GM12878 (cell line): ENCODE measurements at regions of chrX and their contacts with region 1.

Region 1: DNA sequence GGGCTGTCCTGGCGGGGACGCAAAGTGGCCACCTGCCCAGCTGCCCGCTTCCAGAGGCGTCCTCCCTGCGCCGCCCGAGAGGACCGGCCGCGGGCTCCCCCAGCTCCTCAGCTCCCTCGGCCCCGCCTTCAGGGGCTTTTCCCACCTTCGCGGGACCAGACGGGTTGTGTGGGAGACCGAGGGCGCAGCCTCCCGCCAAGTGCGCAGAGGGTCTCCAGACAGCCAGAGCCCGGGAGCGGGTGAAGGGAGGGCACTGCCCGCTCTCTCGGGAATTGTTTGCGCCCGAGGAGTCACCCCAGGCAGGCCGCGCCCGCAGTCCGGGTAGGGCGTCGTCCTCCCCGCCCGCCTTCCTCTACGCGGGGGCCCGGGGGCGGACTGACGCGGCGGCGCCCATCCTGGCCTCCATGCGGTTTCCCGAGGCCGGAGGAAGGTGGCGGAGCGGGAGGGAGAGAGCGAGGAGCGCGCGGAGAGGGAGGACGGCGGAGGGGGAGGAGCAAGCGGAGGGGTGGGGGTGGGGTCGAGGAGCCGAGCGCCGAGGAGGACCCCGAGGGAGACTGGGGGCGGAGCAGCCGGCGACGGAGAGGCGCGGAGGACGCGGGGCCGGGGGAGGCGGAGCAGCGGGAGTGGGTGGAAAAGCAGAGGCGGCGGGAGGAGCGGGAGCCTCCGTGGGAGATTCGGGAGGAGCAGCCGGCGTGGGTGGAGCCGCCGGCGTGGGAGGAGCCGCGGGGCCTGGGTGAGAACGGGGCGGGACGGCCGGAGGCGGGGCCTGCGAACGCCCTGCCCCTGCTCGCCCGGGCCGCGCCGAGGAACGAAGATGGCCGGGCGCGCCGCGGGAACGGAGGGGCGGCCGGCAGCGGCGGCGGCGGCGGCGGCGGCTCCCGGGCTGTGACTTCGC is 47.6 kb downstream of the CLDN34 start:
- DNase-seq: no peak
- ATAC-seq: peak; percentile 66
- H3K4me3 ChIP-seq: peak overlapping the region; percentile 58; the same call in 1 of the 2 replicates
- H3K27ac ChIP-seq: peak overlapping the region; percentile 33; the same call in 1 of the 2 replicates
- H3K4me1 ChIP-seq: peaks cover 9% of the 10 kb centered on the region
- H3K27me3 ChIP-seq: no peaks in the 10 kb centered on the region
- CTCF ChIP-seq: no peak
- EP300 ChIP-seq: no peak
- POLR2A ChIP-seq: peak; percentile 48; the same call in 1 of the 2 replicates
- RAD21 ChIP-seq: no peak

Region 2: DNA sequence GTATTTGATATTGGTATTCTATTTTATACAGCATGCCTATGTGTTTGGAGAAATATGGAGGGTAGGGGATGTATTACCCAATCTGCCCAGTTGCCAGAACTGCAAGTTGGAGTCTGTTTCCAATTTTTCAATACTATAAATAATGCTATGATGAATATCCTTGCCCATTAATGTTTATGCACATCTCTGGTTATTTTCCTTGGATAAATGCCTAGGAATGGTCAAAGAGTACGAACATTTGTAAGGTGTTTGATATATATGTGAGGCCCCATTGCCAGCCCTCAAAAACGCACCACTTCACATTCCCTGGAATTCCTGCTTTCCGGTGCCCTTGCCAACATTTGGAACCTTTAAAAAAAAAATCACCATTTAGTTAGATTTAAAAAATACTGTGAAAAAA is 13.2 kb before region 1 on chrX:
- CTCF ChIA-PET with region 1: interaction called, 30 read pairs
- POLR2A ChIA-PET with region 1: interaction called, 26 read pairs
- RAD21 ChIA-PET with region 1: interaction called, 53 read pairs
- SMC1A ChIA-PET with region 1: interaction called, 54 read pairs
- in situ Hi-C with region 1: no loop called
- intact Hi-C with region 1: loop called (anchors 2 kb)
- DNase-seq: no peak
- ATAC-seq: no peak
- H3K4me3 ChIP-seq: no peak overlapping the region
- H3K27ac ChIP-seq: no peak overlapping the region
- H3K4me1 ChIP-seq: peaks cover 9% of the 10 kb centered on the region
- H3K27me3 ChIP-seq: no peaks in the 10 kb centered on the region
- CTCF ChIP-seq: no peak
- EP300 ChIP-seq: no peak
- POLR2A ChIP-seq: no peak
- RAD21 ChIP-seq: no peak

Region 3: DNA sequence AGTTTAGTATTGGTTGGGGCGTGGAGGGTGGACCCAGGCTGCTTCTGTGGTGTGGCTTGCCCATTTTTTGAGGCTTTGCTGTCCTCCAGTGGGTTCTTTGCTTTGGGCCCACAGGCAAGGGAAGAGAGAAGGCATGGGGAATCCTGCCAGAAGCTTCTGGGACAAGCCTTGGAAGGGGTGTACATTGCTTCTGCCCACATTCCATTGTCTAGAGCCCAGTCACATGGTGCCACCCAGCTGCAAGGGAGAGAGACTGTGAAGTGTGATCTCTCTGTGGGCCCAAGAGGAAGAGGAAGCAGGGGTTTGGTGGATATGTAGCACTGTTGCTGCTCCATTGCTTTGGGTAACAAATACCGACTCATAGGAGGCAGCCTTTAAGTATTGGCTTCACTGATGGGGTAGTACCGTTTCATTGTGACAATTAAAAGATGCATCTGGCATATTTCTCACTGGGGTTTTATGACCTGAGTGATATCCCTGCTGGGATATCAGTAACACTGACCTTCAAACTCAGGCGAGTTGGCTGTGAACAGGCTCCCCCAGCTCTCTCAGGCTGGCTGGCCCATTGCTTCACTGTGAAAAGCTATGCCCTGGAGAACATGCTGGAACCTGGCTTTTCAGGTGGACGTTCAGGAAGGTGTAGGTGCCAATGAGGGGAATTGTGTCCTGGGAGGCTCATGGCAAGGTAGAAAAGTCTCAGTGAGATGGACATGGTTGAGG is 38.4 kb after region 1 on chrX:
- CTCF ChIA-PET with region 1: no interaction called
- POLR2A ChIA-PET with region 1: no interaction called
- RAD21 ChIA-PET with region 1: interaction called, 5 read pairs
- SMC1A ChIA-PET with region 1: no interaction called
- in situ Hi-C with region 1: no loop called
- intact Hi-C with region 1: loop called (anchors 5 kb)
- DNase-seq: no peak
- ATAC-seq: peak; percentile 59
- H3K4me3 ChIP-seq: no peak overlapping the region
- H3K27ac ChIP-seq: no peak overlapping the region
- H3K4me1 ChIP-seq: no peaks in the 10 kb centered on the region
- H3K27me3 ChIP-seq: peaks cover 0 to 4% of the 10 kb centered on the region in 2 experiments; a peak in 1 of 4 replicates
- CTCF ChIP-seq: no peak
- EP300 ChIP-seq: no peak
- POLR2A ChIP-seq: no peak
- RAD21 ChIP-seq: no peak; the same call in 1 of the 2 replicates

Region 4: GRCh38 chrX:10062352-10062751 is 47.6 kb after region 1 on chrX:
- CTCF ChIA-PET with region 1: interaction called, 3 read pairs
- POLR2A ChIA-PET with region 1: no interaction called
- RAD21 ChIA-PET with region 1: interaction called, 4 read pairs
- SMC1A ChIA-PET with region 1: interaction called, 11 read pairs
- in situ Hi-C with region 1: no loop called
- intact Hi-C with region 1: no loop called
- DNase-seq: peak; percentile 45
- ATAC-seq: peak; percentile 89
- H3K4me3 ChIP-seq: no peak overlapping the region
- H3K27ac ChIP-seq: no peak overlapping the region
- H3K4me1 ChIP-seq: peaks cover 5% of the 10 kb centered on the region; the same call in 1 of the 2 replicates
- H3K27me3 ChIP-seq: no peaks in the 10 kb centered on the region
- CTCF ChIP-seq: no peak
- EP300 ChIP-seq: peak in 1 of 2 experiments; percentile 53; a peak in 2 of 4 replicates
- POLR2A ChIP-seq: no peak
- RAD21 ChIP-seq: no peak

Region 5: GRCh38 chrX:10098270-10098713 is 83.6 kb after region 1 on chrX:
- CTCF ChIA-PET with region 1: interaction called, 17 read pairs
- POLR2A ChIA-PET with region 1: interaction called, 16 read pairs
- RAD21 ChIA-PET with region 1: interaction called, 12 read pairs
- SMC1A ChIA-PET with region 1: interaction called, 32 read pairs
- in situ Hi-C with region 1: no loop called
- intact Hi-C with region 1: no loop called
- DNase-seq: peak; percentile 51
- ATAC-seq: peak; percentile 87
- H3K4me3 ChIP-seq: peak overlapping the region; percentile 50
- H3K27ac ChIP-seq: peak overlapping the region; percentile 77
- H3K4me1 ChIP-seq: peaks cover 11% of the 10 kb centered on the region
- H3K27me3 ChIP-seq: no peaks in the 10 kb centered on the region; a peak in 1 of 4 replicates
- CTCF ChIP-seq: no peak
- EP300 ChIP-seq: peak in 1 of 2 experiments; percentile 63; a peak in 1 of 4 replicates
- POLR2A ChIP-seq: no peak
- RAD21 ChIP-seq: 0 out of 2 replicates have a peak, but pooled peaks have one; percentile 19

Region 6: GRCh38 chrX:10111364-10112148 is 96.8 kb after region 1 on chrX:
- CTCF ChIA-PET with region 1: interaction called, 57 read pairs
- POLR2A ChIA-PET with region 1: interaction called, 8 read pairs
- RAD21 ChIA-PET with region 1: interaction called, 31 read pairs
- SMC1A ChIA-PET with region 1: interaction called, 50 read pairs
- in situ Hi-C with region 1: no loop called
- intact Hi-C with region 1: loop called (anchors 1 kb)
- DNase-seq: peak; percentile 59
- ATAC-seq: peak; percentile 69
- H3K4me3 ChIP-seq: peak overlapping the region; percentile 18; the same call in 1 of the 2 replicates
- H3K27ac ChIP-seq: peak overlapping the region; percentile 87
- H3K4me1 ChIP-seq: peaks cover 47% of the 10 kb centered on the region
- H3K27me3 ChIP-seq: no peaks in the 10 kb centered on the region; a peak in 1 of 4 replicates
- CTCF ChIP-seq: no peak
- EP300 ChIP-seq: peak; percentile 46 to 63; a peak in 3 of 4 replicates
- POLR2A ChIP-seq: peak; percentile 60
- RAD21 ChIP-seq: no peak